ENCODE measurements at regions of chr17 and their contacts with region 1.

Region 1: DNA sequence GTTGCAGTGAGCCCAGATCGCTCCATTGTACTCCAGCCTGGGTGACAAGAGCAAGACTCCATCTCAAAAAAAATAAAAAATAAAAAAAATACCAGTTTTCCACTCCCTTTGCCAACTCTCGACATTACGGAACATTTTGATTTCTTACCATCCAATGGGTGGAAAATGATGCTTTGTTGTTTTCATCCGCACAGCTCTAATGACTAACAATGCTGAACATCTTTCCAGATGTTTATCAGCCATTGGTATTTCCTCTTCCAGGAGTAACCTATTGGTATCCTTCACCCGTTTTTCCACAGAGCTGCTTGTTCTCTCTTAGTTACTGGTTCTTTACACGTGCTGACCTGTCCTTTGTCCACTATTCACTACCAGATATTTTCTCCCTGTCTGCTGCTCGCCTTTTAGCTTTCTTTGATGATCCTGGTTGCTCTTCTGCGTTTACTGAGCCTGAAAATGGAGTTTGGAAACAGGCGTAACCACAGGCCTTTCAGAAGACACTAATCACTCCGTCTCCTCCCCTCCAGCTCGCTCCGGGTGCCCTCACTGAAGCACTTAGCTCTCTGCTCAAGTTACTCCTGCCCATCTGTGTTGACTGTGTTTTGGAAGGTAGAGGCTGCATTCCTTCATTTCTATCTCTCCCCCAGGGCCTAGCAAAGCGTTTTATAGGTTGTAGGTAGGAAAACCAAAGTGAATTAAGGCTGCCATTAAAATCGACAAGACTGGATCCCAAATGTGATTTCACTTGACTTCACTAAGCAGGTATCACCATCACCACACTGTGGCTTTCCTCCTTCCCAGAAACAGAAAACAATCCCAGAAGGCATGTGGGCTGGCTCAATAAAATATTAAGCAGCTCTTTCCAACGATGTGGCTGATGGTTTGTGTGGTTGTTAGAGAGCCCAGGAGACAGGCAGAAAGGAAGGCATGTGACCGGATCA is 8.9 kb downstream of the SHPK start:
- DNase-seq: no peak
- H3K4me3 Mint-ChIP-seq: no peak overlapping the region
- H3K27ac Mint-ChIP-seq: no peak overlapping the region
- H3K4me1 Mint-ChIP-seq: no peaks in the 10 kb centered on the region
- H3K27me3 Mint-ChIP-seq: no peaks in the 10 kb centered on the region
- CTCF ChIP-seq: no peak

Region 2: DNA sequence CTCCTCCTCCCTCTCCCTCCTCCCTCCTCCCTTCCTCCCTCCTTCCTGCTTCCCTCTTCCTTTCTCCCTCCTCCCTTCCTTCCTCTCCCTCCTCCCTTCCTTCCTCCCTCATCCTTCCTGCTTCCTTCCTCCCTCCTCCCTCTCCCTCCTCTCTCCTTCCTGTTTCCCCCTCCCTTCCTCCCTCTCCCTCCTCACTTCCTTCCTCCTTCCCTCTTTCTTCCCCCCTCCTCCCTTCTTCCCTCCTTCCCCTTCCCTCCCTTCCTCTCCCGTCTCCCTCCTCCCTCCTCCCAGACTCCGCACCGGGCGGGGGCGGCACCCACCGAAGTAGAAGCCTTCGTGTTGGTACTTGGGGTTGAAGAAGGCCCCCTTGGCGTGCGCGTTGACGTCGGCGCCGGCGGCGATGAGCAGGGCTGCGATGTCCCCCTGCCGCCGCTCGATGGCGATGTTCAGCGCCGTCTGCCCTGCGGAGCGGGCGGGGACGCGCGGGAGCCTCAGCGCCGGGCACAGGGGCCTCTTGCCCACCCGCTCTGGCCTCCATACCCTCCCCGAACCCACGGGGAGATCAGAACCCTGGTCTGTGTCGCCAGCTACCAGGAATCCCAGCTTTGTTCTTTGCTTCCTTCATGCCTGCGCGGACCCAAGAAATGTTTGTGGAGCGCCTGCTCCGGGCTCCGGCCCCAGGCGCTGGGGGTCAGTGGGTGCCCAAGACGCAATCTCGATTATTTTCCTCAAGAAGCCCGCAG is 91.7 kb before region 1 on chr17:
- CTCF ChIA-PET with region 1: interaction called, 19 read pairs
- intact Hi-C with region 1: no loop called
- DNase-seq: peak; percentile 25
- H3K4me3 Mint-ChIP-seq: no peak overlapping the region
- H3K27ac Mint-ChIP-seq: no peak overlapping the region
- H3K4me1 Mint-ChIP-seq: no peaks in the 10 kb centered on the region
- H3K27me3 Mint-ChIP-seq: no peaks in the 10 kb centered on the region
- CTCF ChIP-seq: no peak

Region 3: DNA sequence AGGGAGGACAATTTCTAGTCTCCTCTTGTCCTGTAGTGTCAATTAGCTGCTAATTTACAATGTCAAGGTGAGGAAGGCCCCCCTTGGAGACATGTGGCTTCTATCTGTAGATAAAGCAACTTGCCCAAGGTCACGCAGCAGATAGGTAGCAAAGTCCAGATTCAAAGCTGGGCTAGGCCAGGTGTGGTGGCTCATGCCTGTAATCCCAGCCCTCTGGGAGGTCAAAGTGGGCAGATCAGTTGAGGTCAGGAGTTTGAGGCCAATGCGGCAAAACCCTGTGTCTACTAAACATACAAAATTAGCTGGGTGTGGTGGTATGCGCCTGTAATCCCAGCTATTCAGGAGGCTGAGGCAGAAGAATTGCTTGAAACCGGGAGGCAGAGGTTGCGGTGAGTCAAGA is 80.6 kb before region 1 on chr17:
- CTCF ChIA-PET with region 1: no interaction called
- intact Hi-C with region 1: no loop called
- DNase-seq: no peak
- H3K4me3 Mint-ChIP-seq: no peak overlapping the region
- H3K27ac Mint-ChIP-seq: no peak overlapping the region
- H3K4me1 Mint-ChIP-seq: no peaks in the 10 kb centered on the region
- H3K27me3 Mint-ChIP-seq: peaks cover 26% of the 10 kb centered on the region
- CTCF ChIP-seq: no peak

Region 4: GRCh38 chr17:3613139-3613538 is 14.0 kb before region 1 on chr17:
- CTCF ChIA-PET with region 1: no interaction called
- intact Hi-C with region 1: no loop called
- DNase-seq: no peak
- H3K4me3 Mint-ChIP-seq: no peak overlapping the region
- H3K27ac Mint-ChIP-seq: no peak overlapping the region
- H3K4me1 Mint-ChIP-seq: no peaks in the 10 kb centered on the region
- H3K27me3 Mint-ChIP-seq: no peaks in the 10 kb centered on the region
- CTCF ChIP-seq: no peak

Region 5: DNA sequence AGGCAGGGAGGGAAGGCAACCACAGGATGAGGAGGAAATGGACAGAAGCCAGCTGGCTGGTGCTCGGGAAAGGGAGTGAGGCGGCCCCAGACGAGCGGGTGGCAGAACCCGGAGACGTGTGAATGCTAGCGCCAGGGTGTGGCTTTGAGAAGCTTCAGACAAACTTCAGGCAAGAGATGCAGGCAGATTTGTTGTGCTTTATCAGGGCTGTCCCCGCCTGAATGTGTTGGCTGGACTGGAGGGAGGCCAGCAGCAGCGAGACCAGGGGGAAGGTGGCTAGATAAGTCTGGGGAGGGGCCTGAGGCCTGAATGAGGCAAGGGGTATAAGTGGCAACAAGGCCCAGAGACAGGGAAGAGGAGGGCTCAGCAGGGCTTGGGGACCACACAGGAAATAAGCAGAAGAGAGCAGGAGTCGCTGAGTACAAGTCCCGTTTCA is 243.8 kb after region 1 on chr17:
- CTCF ChIA-PET with region 1: no interaction called
- intact Hi-C with region 1: no loop called
- DNase-seq: no peak
- H3K4me3 Mint-ChIP-seq: no peak overlapping the region
- H3K27ac Mint-ChIP-seq: no peak overlapping the region
- H3K4me1 Mint-ChIP-seq: no peaks in the 10 kb centered on the region
- H3K27me3 Mint-ChIP-seq: no peaks in the 10 kb centered on the region
- CTCF ChIP-seq: no peak

Measured in Calu3 (cell line).